Heart left ventricle (tissue), 16 donors: ENCODE measurements at regions of chr11 and their contacts with region 1.

Region 1: GRCh38 chr11:126310228-126310991 is 6.5 kb downstream of the DCPS start:
- DNase-seq: peak; percentile 78 to 89 (median 81)
- ATAC-seq: peak; percentile 84 to 95 (median 94)
- H3K4me3 ChIP-seq: no peak overlapping the region
- H3K27ac ChIP-seq: peak overlapping the region in 3 of 12 donors; percentile 7 to 16 (median 11)
- H3K4me1 ChIP-seq: peaks cover 0 to 27% (median 7%) of the 10 kb centered on the region in 12 donors
- H3K27me3 ChIP-seq: no peaks in the 10 kb centered on the region
- CTCF ChIP-seq: peak; percentile 84 to 95 (median 89)
- POLR2A ChIP-seq: no peak

Region 2: DNA sequence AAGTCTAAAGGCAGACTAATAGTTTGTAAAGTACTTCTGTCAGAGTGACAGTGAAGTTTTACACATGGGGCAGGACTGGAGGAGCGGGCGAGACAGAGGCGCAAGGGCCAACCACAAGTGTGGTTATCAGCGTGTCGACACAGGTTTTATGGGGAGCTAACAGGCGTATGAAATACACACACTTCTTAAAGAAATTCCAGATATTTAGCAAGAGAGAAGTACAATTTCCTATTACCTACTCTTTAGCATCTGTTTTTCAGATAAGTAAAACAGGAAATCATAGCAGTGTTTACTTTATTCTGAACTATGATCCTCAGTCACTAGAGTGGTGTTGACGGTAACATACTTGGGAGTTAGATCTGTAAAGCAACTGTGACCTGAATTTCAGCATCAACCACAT is 342.1 kb before region 1 on chr11:
- intact Hi-C with region 1: no loop called
- DNase-seq: no peak
- ATAC-seq: no peak
- H3K4me3 ChIP-seq: no peak overlapping the region
- H3K27ac ChIP-seq: no peak overlapping the region
- H3K4me1 ChIP-seq: no peaks in the 10 kb centered on the region
- H3K27me3 ChIP-seq: no peaks in the 10 kb centered on the region
- CTCF ChIP-seq: no peak
- POLR2A ChIP-seq: no peak

Region 3: GRCh38 chr11:126355324-126355925 is 45.0 kb after region 1 on chr11 and contains the start of gene ST3GAL4:
- intact Hi-C with region 1: loop called in 6 of 10 experiments (anchors 2 to 5 kb)
- DNase-seq: peak; percentile 90 to 95 (median 91)
- ATAC-seq: peak; percentile 75 to 85 (median 83)
- H3K4me3 ChIP-seq: peak within 1 kb of the TSS; percentile 50 to 97 (median 71)
- H3K27ac ChIP-seq: peak within 1 kb of the TSS; percentile 69 to 94 (median 84)
- H3K4me1 ChIP-seq: peaks cover 7 to 90% (median 75%) of the 10 kb centered on the region in 12 donors
- H3K27me3 ChIP-seq: no peaks in the 10 kb centered on the region
- CTCF ChIP-seq: no peak
- POLR2A ChIP-seq: no peak
- total RNA-seq, gene ST3GAL4: 30.6 to 88.5 (median 59.8) TPM

Region 4: DNA sequence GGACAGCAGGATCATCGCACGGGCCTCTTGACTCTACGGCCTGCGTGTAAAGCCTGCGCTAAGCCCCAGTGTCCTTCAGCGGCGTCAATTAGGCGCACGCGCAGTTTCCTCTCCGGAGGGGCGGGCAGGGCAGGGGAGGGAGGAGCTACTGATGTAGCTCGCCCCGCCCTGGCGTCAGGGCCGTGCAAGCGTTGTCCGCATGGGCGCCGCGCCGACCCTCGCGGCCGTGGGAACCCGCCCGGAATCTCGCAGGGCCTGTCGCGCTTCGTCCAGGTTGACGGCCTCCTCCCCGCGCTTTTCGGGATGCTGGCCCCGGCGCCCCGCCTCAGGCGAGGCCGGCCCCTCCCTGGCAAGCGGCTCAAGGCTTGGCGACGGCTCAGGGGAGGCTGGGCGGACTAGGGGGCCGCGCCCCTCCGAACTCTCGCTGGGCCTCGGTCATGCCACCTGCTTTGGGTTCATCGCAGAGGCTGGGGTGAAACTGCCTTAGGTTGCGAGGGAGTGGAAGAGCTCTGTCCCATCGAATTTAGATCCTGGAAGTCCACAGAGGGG is 106.2 kb after region 1 on chr11:
- intact Hi-C with region 1: loop called in 5 of 10 experiments (anchors 5 to 10 kb)
- DNase-seq: peak; percentile 90 to 96 (median 93)
- ATAC-seq: peak; percentile 69 to 88 (median 84)
- H3K4me3 ChIP-seq: peak overlapping the region in 11 of 12 donors; percentile 16 to 61 (median 49)
- H3K27ac ChIP-seq: peak overlapping the region; percentile 69 to 93 (median 86)
- H3K4me1 ChIP-seq: peaks cover 3 to 80% (median 61%) of the 10 kb centered on the region in 12 donors
- H3K27me3 ChIP-seq: no peaks in the 10 kb centered on the region
- CTCF ChIP-seq: no peak
- POLR2A ChIP-seq: peak in 1 of 2 donors; percentile 62

Region 5: GRCh38 chr11:126440792-126441514 is 130.5 kb after region 1 on chr11:
- intact Hi-C with region 1: loop called in 8 of 10 experiments (anchors 2 to 10 kb)
- DNase-seq: peak; percentile 74 to 85 (median 77)
- ATAC-seq: peak; percentile 45 to 74 (median 66)
- H3K4me3 ChIP-seq: no peak overlapping the region
- H3K27ac ChIP-seq: no peak overlapping the region
- H3K4me1 ChIP-seq: peaks cover 0 to 31% (median 8%) of the 10 kb centered on the region in 12 donors
- H3K27me3 ChIP-seq: no peaks in the 10 kb centered on the region
- CTCF ChIP-seq: peak; percentile 88 to 98 (median 96)
- POLR2A ChIP-seq: no peak

Region 6: DNA sequence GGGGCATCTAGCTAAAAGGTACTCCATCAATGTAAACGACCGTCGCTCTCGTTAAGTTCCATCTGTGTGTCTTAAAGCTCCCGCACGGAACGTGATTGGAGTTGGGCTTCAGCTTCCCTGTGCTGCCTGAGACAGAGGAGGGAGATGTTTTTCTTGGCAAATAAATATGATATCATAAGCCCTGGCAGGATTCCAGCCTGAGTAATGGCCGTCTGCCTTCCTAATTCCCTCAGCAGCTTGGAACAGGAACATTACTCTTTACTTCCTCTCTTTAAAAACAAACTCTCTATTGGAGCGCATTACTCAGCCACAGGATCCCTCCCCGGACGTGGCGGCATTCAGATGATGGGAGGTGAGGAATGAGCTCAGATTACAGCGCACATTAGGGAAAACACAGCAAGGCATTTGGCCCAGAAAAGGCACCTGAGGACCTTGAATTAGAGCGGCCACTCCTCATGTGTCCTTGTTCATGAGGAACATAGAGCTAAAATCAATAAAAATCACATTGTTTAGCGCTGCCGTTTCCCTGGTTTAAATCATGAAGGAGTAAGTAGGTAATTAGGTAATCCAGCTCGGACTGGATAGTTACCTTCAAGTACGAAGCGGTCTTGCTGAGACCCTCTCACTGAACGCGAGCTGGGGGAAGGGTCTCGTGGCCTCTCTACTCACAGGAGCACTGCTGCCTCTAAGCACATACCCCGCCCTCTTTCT is 275.5 kb after region 1 on chr11:
- intact Hi-C with region 1: no loop called
- DNase-seq: peak; percentile 66 to 73 (median 72)
- ATAC-seq: peak; percentile 85 to 97 (median 92)
- H3K4me3 ChIP-seq: peak overlapping the region in 10 of 12 donors; percentile 8 to 45 (median 22)
- H3K27ac ChIP-seq: peak overlapping the region in 8 of 12 donors; percentile 25 to 68 (median 30)
- H3K4me1 ChIP-seq: peaks cover 0 to 12% (median 3%) of the 10 kb centered on the region in 12 donors
- H3K27me3 ChIP-seq: peaks cover 0 to 7% (median 0%) of the 10 kb centered on the region in 9 donors
- CTCF ChIP-seq: no peak
- POLR2A ChIP-seq: no peak

Region 7: GRCh38 chr11:126938717-126939116 is 628.3 kb after region 1 on chr11:
- intact Hi-C with region 1: no loop called
- DNase-seq: no peak
- ATAC-seq: no peak
- H3K4me3 ChIP-seq: no peak overlapping the region
- H3K27ac ChIP-seq: no peak overlapping the region
- H3K4me1 ChIP-seq: no peaks in the 10 kb centered on the region
- H3K27me3 ChIP-seq: peaks cover 0 to 6% (median 0%) of the 10 kb centered on the region in 9 donors
- CTCF ChIP-seq: no peak
- POLR2A ChIP-seq: no peak

Region 8: GRCh38 chr11:126989942-126990715 is 679.7 kb after region 1 on chr11:
- intact Hi-C with region 1: loop called in 7 of 10 experiments (anchors 5 to 10 kb)
- DNase-seq: peak; percentile 41 to 76 (median 70)
- ATAC-seq: peak; percentile 78 to 85 (median 84)
- H3K4me3 ChIP-seq: no peak overlapping the region
- H3K27ac ChIP-seq: no peak overlapping the region
- H3K4me1 ChIP-seq: peaks cover 0 to 4% (median 0%) of the 10 kb centered on the region in 12 donors
- H3K27me3 ChIP-seq: peaks cover 0 to 31% (median 7%) of the 10 kb centered on the region in 9 donors
- CTCF ChIP-seq: peak; percentile 79 to 93 (median 86)
- POLR2A ChIP-seq: no peak